Motor neuron (in vitro differentiated cells): ENCODE measurements at regions of chr10 and their contacts with region 1.

Region 1: GRCh38 chr10:100518761-100519241 is 860 bp downstream of the SEC31B start:
- ATAC-seq: peak; percentile 46 to 79 (median 58)
- H3K4me3 ChIP-seq: peak overlapping the region; percentile 33 to 53 (median 37)
- H3K27ac ChIP-seq: no peak overlapping the region
- H3K4me1 ChIP-seq: peaks cover 4 to 7% of the 10 kb centered on the region in 2 donors

Region 2: DNA sequence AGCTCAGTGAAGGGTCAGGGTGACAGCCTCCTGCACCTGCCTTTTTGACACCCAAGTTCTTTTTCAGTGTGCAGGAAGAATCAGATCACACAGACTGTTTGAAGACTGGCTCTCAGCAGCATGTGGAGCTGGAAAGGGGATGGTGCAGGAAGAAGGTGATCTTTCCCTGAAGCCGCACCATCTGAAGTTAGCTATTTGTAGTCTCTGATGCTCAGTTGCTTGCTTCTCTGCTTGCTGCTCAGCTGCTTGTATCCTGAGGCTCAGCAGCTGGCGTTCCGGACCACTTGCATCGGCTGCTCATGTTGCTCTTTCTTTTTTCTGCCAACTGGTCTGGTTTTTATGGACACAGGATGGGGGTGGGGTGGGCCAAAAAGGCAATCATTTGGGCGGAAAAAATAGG is 493.2 kb before region 1 on chr10:
- in situ Hi-C with region 1: no loop called
- ATAC-seq: peak in 3 of 8 experiments; percentile 61 to 77 (median 62)
- H3K4me3 ChIP-seq: no peak overlapping the region
- H3K27ac ChIP-seq: no peak overlapping the region
- H3K4me1 ChIP-seq: no peaks in the 10 kb centered on the region

Region 3: GRCh38 chr10:100346765-100347567 is 171.8 kb before region 1 on chr10 and contains the start of gene SCD:
- in situ Hi-C with region 1: loop called in 2 of 9 experiments (anchors 25 kb)
- ATAC-seq: peak; percentile 83 to 90 (median 86)
- H3K4me3 ChIP-seq: peak within 1 kb of the TSS; percentile 67 to 87 (median 82)
- H3K27ac ChIP-seq: peak within 1 kb of the TSS; percentile 96 to 99
- H3K4me1 ChIP-seq: peaks cover 35 to 40% of the 10 kb centered on the region in 2 donors
- total RNA-seq, gene SCD: 100 to 535 (median 198) TPM

Region 4: DNA sequence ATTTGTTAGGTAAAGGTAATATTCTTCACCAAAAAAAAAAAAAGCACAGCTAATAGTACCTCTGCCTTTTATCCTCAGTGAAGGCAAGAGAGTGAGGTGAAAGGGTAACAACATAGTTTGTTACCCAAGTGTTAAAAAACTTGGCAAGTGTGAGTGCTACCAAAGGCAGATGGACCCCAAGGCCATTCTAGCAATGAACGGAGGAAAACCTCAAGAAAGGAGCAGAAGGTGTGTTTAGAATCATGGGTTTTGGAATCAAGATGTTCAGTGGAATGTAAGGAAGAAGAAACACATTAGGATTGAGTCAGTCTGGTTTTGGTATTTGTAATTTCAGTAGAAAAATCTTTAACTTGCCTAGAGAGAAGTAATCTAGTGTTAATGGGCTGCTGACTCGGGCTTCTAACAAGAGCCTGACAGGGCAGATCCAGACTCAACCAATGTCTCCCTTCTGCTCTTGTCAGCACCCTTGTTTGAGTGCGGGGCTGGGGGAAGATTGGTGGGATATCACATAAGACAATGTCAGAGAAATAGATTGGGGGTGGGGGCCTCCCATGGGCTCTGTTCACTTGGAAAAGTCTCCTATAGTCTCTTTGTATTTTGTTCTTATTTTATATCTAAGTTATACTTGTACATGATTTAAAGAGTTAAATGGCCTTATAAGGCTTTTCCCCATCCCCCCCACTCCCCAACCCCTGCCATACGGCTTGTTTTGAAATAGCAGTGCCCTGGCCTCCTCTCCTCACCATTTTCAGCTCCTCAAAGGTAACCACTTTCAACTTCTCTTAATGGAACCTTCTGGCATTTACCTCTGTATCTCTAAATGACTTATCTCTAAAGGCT is 127.4 kb before region 1 on chr10:
- in situ Hi-C with region 1: no loop called
- ATAC-seq: no peak
- H3K4me3 ChIP-seq: no peak overlapping the region
- H3K27ac ChIP-seq: no peak overlapping the region
- H3K4me1 ChIP-seq: no peaks in the 10 kb centered on the region

Region 5: DNA sequence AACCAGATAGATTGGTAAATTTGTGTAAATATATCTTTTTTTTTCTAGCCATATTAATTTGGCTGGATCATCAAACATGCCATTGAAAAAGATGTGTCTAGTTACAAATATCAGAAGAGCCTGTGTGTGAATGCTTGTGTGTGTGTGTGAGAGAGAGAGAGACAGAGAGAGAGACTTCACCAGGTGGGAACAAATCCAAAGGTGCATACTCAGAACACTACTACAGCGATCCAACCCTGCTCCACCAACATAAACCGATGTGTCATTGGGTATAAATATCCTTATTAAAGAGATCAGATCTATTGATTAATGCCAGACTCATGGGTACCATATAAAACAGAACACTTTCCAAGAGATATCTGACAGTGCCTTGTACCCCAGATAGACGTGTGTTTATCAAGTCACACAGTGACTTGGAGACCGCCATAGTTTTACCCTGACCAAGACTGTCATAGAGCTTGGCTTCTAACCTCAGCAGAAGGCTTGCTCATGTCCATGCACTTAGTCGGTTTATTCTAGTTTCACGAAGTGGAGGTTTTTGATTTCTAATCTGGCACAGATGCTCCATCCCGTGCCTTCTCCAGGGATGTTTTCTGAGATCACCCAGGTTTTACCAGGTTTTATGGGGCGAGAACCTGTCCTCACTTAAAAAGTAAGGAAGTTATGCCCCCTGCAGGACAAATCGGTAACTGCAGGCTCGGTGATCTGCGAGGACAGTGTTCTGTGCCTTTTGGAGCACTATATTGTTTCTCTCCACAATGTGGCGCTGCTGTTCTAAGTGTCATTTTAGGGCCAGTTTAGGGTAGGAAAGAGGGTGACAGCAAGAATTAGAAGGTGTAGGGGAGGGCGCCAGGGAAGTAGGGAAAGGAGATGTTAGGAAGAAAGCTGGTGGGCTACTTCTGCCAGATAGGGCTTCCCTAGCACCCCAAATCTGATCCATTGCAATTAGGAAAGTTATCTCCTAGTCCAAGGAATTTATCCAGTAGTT is 85.3 kb before region 1 on chr10:
- in situ Hi-C with region 1: loop called in 1 of 9 experiments (anchors 10 kb)
- ATAC-seq: peak; percentile 93 to 100 (median 99)
- H3K4me3 ChIP-seq: no peak overlapping the region
- H3K27ac ChIP-seq: no peak overlapping the region
- H3K4me1 ChIP-seq: no peaks in the 10 kb centered on the region